ENCODE measurements at regions of chr17 and their contacts with region 1.

Region 1: GRCh38 chr17:40559954-40560591 is 5.2 kb downstream of the CCR7 start:
- DNase-seq: peak; percentile 71
- ATAC-seq: peak; percentile 25
- H3K4me3 Mint-ChIP-seq: peak overlapping the region; percentile 89
- H3K27ac Mint-ChIP-seq: peak overlapping the region; percentile 99
- H3K4me1 Mint-ChIP-seq: peaks cover 81% of the 10 kb centered on the region
- H3K27me3 Mint-ChIP-seq: no peaks in the 10 kb centered on the region
- CTCF ChIP-seq: peak; percentile 74

Region 2: DNA sequence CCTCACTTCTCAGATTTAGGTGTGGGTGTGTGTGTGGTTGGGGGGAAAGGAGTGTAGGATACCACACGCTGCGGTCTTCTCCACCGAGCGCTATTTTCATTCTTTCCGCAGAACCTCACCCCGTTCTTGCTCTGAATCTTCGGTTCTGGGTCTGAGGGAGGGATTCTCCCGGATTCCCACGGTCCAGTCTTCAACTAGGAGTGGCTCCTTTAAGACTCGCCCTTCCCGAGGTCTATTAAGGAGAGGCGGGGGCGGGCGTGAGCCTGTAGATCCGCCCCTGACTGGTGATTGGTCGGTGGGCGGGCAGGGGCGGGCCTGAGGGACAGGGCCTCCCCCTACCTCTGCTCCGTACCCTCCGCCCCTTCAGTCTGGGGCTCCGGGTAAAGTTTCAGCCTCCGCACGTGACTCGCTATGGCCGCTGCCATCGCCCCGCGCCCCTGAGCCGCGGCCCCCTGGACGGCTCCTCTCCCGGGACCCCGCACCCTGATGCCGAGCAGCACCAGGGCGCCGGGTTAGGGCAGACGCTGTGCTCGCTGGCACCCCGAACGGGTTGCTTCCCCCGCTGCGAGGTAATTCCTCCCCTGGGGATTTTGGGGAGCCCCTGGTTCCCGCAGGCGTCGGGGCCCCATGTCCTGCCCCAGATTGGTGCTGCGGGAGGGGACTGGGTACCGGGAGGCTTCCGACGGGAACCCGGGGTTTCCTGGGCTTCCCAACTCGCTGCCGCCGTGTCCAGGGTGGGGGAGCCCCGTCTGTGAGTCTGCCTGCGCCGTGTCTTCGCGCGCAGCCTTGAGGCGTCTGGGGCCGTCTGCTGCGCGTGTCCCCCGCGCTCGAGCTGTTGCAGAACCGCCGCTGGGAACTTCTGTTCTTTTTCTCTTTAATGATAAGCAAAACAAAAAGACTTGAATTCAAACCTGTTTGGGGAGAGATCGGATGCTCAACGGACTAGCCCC is 241.9 kb before region 1 on chr17:
- CTCF ChIA-PET with region 1: no interaction called
- POLR2A ChIA-PET with region 1: interaction called, 12 read pairs
- intact Hi-C with region 1: no loop called
- DNase-seq: peak; percentile 88
- ATAC-seq: peak; percentile 65
- H3K4me3 Mint-ChIP-seq: peak overlapping the region; percentile 93
- H3K27ac Mint-ChIP-seq: peak overlapping the region; percentile 98
- H3K4me1 Mint-ChIP-seq: peaks cover 85% of the 10 kb centered on the region
- H3K27me3 Mint-ChIP-seq: no peaks in the 10 kb centered on the region
- CTCF ChIP-seq: no peak

Region 3: GRCh38 chr17:40417609-40418427 is 142.3 kb before region 1 on chr17 and contains the start of gene TOP2A:
- CTCF ChIA-PET with region 1: interaction called, 10 read pairs
- POLR2A ChIA-PET with region 1: interaction called, 21 read pairs
- intact Hi-C with region 1: loop called (anchors 1 kb)
- DNase-seq: peak; percentile 91
- ATAC-seq: peak; percentile 100
- H3K4me3 Mint-ChIP-seq: peak within 1 kb of the TSS; percentile 94
- H3K27ac Mint-ChIP-seq: peak within 1 kb of the TSS; percentile 84
- H3K4me1 Mint-ChIP-seq: peaks cover 23% of the 10 kb centered on the region
- H3K27me3 Mint-ChIP-seq: no peaks in the 10 kb centered on the region
- CTCF ChIP-seq: no peak
- total RNA-seq, gene TOP2A: 5.3 and 6.6 TPM in 2 replicates

Region 4: GRCh38 chr17:40531051-40531991 is 28.8 kb before region 1 on chr17:
- CTCF ChIA-PET with region 1: interaction called, 112 read pairs
- POLR2A ChIA-PET with region 1: interaction called, 1,450 read pairs
- intact Hi-C with region 1: loop called (anchors 1 kb)
- DNase-seq: no peak
- ATAC-seq: peak; percentile 26
- H3K4me3 Mint-ChIP-seq: peak overlapping the region; percentile 42
- H3K27ac Mint-ChIP-seq: peak overlapping the region; percentile 93
- H3K4me1 Mint-ChIP-seq: peaks cover 61% of the 10 kb centered on the region
- H3K27me3 Mint-ChIP-seq: no peaks in the 10 kb centered on the region
- CTCF ChIP-seq: no peak

Region 5: GRCh38 chr17:40582328-40582901 is 22.3 kb after region 1 on chr17:
- CTCF ChIA-PET with region 1: interaction called, 25 read pairs
- POLR2A ChIA-PET with region 1: interaction called, 1,450 read pairs
- intact Hi-C with region 1: loop called (anchors 1 kb)
- DNase-seq: no peak
- ATAC-seq: peak; percentile 55
- H3K4me3 Mint-ChIP-seq: peak overlapping the region; percentile 54
- H3K27ac Mint-ChIP-seq: peak overlapping the region; percentile 87
- H3K4me1 Mint-ChIP-seq: peaks cover 93% of the 10 kb centered on the region
- H3K27me3 Mint-ChIP-seq: no peaks in the 10 kb centered on the region
- CTCF ChIP-seq: no peak

Region 6: DNA sequence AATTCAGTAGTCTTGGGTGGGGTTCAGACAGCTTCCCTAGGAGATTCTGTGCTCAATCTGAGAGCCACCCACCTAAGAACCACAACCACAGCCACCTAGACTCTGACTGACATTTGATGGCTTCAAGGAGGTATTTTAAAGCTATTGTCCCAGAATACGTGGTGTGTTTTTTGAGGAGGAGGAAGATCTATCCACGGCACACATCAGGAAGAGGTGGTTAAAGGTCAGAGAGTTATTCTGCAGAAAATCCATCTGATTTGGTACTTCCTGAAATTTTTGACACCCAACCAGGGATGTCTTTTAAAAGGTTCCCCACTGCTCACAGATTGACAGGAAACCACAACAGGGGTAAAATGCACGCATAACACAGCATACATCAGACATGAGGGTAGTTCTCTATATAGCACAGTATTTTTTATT is 62.4 kb after region 1 on chr17:
- CTCF ChIA-PET with region 1: interaction called, 426 read pairs
- POLR2A ChIA-PET with region 1: interaction called, 1,885 read pairs
- intact Hi-C with region 1: loop called (anchors 1 kb)
- DNase-seq: no peak
- ATAC-seq: no peak
- H3K4me3 Mint-ChIP-seq: peak overlapping the region; percentile 53
- H3K27ac Mint-ChIP-seq: peak overlapping the region; percentile 67
- H3K4me1 Mint-ChIP-seq: peaks cover 71% of the 10 kb centered on the region
- H3K27me3 Mint-ChIP-seq: no peaks in the 10 kb centered on the region
- CTCF ChIP-seq: no peak

Region 7: DNA sequence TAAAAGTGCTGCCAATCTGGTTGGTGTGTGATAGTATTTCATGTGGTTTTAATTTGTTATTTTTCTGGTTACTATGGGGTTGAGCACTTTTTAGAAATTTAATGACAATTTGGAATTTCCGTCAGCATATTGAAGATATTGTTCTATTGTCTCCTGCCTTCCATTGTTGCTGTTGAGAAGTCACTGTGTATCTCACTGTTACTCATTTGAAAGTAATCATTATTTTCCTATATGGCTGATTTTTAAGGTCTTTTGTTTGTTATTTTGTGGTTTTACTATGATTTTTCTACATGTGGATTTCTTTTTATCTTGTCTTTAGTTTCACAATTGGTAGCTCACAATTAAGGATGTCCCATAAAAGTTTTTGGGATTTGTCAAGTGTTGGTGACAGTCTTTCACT is 203.7 kb after region 1 on chr17:
- CTCF ChIA-PET with region 1: no interaction called
- POLR2A ChIA-PET with region 1: no interaction called
- intact Hi-C with region 1: no loop called
- DNase-seq: no peak
- ATAC-seq: no peak
- H3K4me3 Mint-ChIP-seq: no peak overlapping the region
- H3K27ac Mint-ChIP-seq: no peak overlapping the region
- H3K4me1 Mint-ChIP-seq: no peaks in the 10 kb centered on the region
- H3K27me3 Mint-ChIP-seq: peaks cover 21% of the 10 kb centered on the region
- CTCF ChIP-seq: no peak

Region 8: DNA sequence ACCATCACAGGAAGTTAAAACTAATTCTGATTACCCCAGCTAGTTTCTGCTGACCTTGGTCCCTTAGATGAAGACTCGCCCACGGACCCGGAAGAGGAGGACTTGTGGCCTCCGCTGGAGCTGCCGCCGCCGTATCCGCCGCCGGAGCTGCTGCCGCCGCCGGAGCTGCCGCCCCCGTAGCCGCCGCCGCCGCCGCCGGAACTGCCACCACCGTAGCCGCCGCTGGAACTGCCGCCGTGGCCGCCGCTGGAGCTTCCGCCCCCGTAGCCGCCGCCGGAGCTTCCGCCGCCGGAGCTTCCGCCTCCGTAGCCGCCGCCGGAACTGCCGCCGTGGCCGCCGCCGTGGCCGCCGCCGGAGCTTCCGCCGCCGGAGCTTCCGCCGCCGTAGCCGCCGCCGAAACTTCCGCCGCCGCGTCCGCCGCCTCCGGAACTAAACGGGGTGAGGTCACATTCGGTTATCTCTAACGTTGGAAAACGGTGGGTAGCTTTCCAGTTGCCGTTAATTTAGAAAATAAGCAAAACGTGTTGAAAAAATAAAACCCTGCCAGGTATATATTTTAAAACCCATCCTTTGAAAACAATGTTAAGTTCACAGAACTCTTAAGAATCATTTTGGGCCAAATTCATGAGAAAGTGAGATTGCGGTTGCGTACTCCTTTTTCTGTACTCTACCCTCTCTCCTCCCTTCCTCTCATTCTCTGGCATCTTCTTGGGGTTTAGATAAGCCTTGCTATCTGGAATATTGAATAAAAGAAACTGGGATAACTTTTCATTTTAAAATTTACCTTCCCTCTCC is 258.9 kb after region 1 on chr17:
- CTCF ChIA-PET with region 1: no interaction called
- POLR2A ChIA-PET with region 1: interaction called, 5 read pairs
- intact Hi-C with region 1: loop called (anchors 5 kb)
- DNase-seq: peak; percentile 79
- ATAC-seq: peak; percentile 89
- H3K4me3 Mint-ChIP-seq: peak overlapping the region; percentile 87
- H3K27ac Mint-ChIP-seq: peak overlapping the region; percentile 83
- H3K4me1 Mint-ChIP-seq: peaks cover 10% of the 10 kb centered on the region
- H3K27me3 Mint-ChIP-seq: peaks cover 14% of the 10 kb centered on the region
- CTCF ChIP-seq: no peak